ENCODE measurements at regions of chr7 and their contacts with region 1.

Region 1: GRCh38 chr7:50595491-50596102 is 30.4 kb upstream of the DDC start:
- DNase-seq: no peak
- ATAC-seq: peak; percentile 56
- H3K4me3 ChIP-seq: no peak overlapping the region
- H3K4me3 Mint-ChIP-seq: peak overlapping the region in 1 of 10 donors; percentile 29
- H3K27ac ChIP-seq: no peak overlapping the region
- H3K27ac Mint-ChIP-seq: no peak overlapping the region
- H3K4me1 ChIP-seq: no peaks in the 10 kb centered on the region
- H3K4me1 Mint-ChIP-seq: peaks cover 0 to 30% (median 0%) of the 10 kb centered on the region in 7 donors
- H3K27me3 ChIP-seq: no peaks in the 10 kb centered on the region
- H3K27me3 Mint-ChIP-seq: peaks cover 0 to 12% (median 1%) of the 10 kb centered on the region in 5 donors

Region 2: GRCh38 chr7:50534690-50535290 is 60.8 kb before region 1 on chr7:
- CTCF ChIA-PET with region 1: no interaction called
- POLR2A ChIA-PET with region 1: no interaction called
- intact Hi-C with region 1: loop called in 1 of 2 experiments (anchors 10 kb)
- DNase-seq: no peak
- ATAC-seq: peak; percentile 60
- H3K4me3 ChIP-seq: no peak overlapping the region
- H3K4me3 Mint-ChIP-seq: no peak overlapping the region
- H3K27ac ChIP-seq: no peak overlapping the region
- H3K27ac Mint-ChIP-seq: no peak overlapping the region
- H3K4me1 ChIP-seq: no peaks in the 10 kb centered on the region
- H3K4me1 Mint-ChIP-seq: peaks cover 0 to 5% (median 0%) of the 10 kb centered on the region in 7 donors
- H3K27me3 ChIP-seq: no peaks in the 10 kb centered on the region
- H3K27me3 Mint-ChIP-seq: peaks cover 0 to 12% (median 10%) of the 10 kb centered on the region in 5 donors

Measured in naive thymus-derived CD4-positive, alpha-beta T cell (primary cell).